RWPE1 (cell line): ENCODE measurements at regions of chr5 and their contacts with region 1.

Region 1: GRCh38 chr5:172106511-172107356 is 81.3 kb downstream of the STK10 start:
- DNase-seq: peak; percentile 62
- H3K27ac ChIP-seq: peak overlapping the region; percentile 79
- CTCF ChIP-seq: peak; percentile 100

Region 2: GRCh38 chr5:172150514-172151425 is 44.0 kb after region 1 on chr5:
- CTCF ChIA-PET with region 1: no interaction called
- POLR2A ChIA-PET with region 1: no interaction called
- DNase-seq: no peak
- H3K27ac ChIP-seq: peak overlapping the region; percentile 9; the same call in 1 of the 2 replicates
- CTCF ChIP-seq: no peak

Region 3: DNA sequence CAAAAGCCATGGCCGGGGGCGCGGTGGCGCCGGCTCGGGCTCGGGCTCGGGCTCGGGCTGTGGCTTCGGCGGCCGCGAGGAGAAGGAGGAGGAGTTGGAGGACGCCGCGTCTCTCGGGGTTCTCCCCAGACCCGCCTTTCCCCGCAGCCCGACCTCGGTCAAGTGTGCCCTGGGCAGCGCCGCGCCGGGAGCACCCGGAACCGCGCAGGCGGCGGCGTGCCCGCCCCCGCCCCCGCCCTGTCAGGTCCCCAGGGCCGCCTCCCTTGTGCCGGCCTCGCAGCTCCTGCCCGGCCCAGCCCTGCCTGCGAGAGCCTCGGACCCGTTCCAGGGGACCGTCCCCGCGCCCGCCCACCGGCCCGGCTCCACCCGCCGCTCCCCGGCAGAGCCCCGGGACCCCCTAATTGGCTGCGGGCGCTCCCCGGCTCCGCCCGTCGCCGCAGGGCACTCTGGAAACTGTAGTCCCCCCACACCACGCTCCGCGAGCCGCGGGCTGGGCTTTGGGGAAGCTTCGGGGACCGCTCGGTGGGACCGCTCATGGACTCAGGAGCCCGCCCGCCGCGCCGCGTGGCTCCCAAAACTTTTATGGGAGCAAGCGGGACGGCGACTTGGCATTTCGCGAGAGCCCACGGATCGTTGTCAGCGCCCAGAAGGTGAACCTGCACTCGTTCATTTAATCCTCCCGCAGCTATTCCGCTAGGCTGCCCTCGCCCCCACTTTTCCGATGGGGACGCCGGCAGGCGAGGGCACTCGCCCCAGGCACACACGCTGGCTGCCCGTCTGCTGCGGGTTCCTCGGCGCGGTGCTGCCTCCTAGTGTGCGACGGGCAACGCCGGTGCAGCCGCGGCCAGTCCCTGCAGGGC is 81.5 kb after region 1 on chr5 and contains the start of gene STK10:
- CTCF ChIA-PET with region 1: interaction called, 36 read pairs
- POLR2A ChIA-PET with region 1: interaction called, 3 read pairs
- DNase-seq: peak; percentile 96
- H3K27ac ChIP-seq: peak within 1 kb of the TSS; percentile 89
- CTCF ChIP-seq: peak; percentile 98